HepG2 (cell line): ENCODE measurements at regions of chr17 and their contacts with region 1.

Region 1: GRCh38 chr17:63425482-63425881 is 20.6 kb downstream of the CYB561 start:
- DNase-seq: peak; percentile 80
- ATAC-seq: peak; percentile 86
- H3K4me3 ChIP-seq: no peak overlapping the region
- H3K27ac ChIP-seq: no peak overlapping the region
- H3K4me1 ChIP-seq: peaks cover 21% of the 10 kb centered on the region
- H3K27me3 ChIP-seq: peaks cover 13 to 65% of the 10 kb centered on the region in 2 experiments; a peak in 4 of 5 replicates
- CTCF ChIP-seq: peak; percentile 97
- EP300 ChIP-seq: no peak
- POLR2A ChIP-seq: no peak
- RAD21 ChIP-seq: peak; percentile 97

Region 2: GRCh38 chr17:63113183-63113582 is 312.3 kb before region 1 on chr17:
- CTCF ChIA-PET with region 1: no interaction called
- POLR2A ChIA-PET with region 1: no interaction called
- in situ Hi-C with region 1: no loop called
- intact Hi-C with region 1: no loop called
- DNase-seq: peak; percentile 19
- ATAC-seq: peak; percentile 50; the same call in 1 of the 3 replicates
- H3K4me3 ChIP-seq: no peak overlapping the region
- H3K27ac ChIP-seq: no peak overlapping the region
- H3K4me1 ChIP-seq: no peaks in the 10 kb centered on the region
- H3K27me3 ChIP-seq: no peaks in the 10 kb centered on the region
- CTCF ChIP-seq: peak; percentile 37; the same call in 1 of the 2 replicates
- EP300 ChIP-seq: no peak
- POLR2A ChIP-seq: no peak
- RAD21 ChIP-seq: no peak

Region 3: GRCh38 chr17:63381101-63381729 is 44.3 kb before region 1 on chr17:
- CTCF ChIA-PET with region 1: no interaction called
- POLR2A ChIA-PET with region 1: no interaction called
- in situ Hi-C with region 1: no loop called
- intact Hi-C with region 1: no loop called
- DNase-seq: no peak
- ATAC-seq: no peak
- H3K4me3 ChIP-seq: no peak overlapping the region
- H3K27ac ChIP-seq: no peak overlapping the region
- H3K4me1 ChIP-seq: no peaks in the 10 kb centered on the region
- H3K27me3 ChIP-seq: peaks cover 0 to 8% of the 10 kb centered on the region in 2 experiments; a peak in 2 of 5 replicates
- CTCF ChIP-seq: no peak
- EP300 ChIP-seq: no peak
- POLR2A ChIP-seq: no peak
- RAD21 ChIP-seq: no peak

Region 4: GRCh38 chr17:63478791-63479494 is 53.5 kb after region 1 on chr17:
- CTCF ChIA-PET with region 1: interaction called, 53 read pairs
- POLR2A ChIA-PET with region 1: no interaction called
- in situ Hi-C with region 1: loop called (anchors 5 kb)
- intact Hi-C with region 1: loop called (anchors 1 kb)
- DNase-seq: peak; percentile 80
- ATAC-seq: peak; percentile 88
- H3K4me3 ChIP-seq: no peak overlapping the region
- H3K27ac ChIP-seq: no peak overlapping the region
- H3K4me1 ChIP-seq: peaks cover 28% of the 10 kb centered on the region
- H3K27me3 ChIP-seq: peaks cover 27 to 87% of the 10 kb centered on the region in 2 experiments
- CTCF ChIP-seq: peak; percentile 98
- EP300 ChIP-seq: no peak
- POLR2A ChIP-seq: no peak
- RAD21 ChIP-seq: peak; percentile 88

Region 5: GRCh38 chr17:63571763-63572271 is 146.3 kb after region 1 on chr17:
- CTCF ChIA-PET with region 1: interaction called, 8 read pairs
- POLR2A ChIA-PET with region 1: no interaction called
- in situ Hi-C with region 1: no loop called
- intact Hi-C with region 1: loop called (anchors 10 kb)
- DNase-seq: peak; percentile 16
- ATAC-seq: no peak
- H3K4me3 ChIP-seq: no peak overlapping the region
- H3K27ac ChIP-seq: no peak overlapping the region
- H3K4me1 ChIP-seq: peaks cover 12% of the 10 kb centered on the region
- H3K27me3 ChIP-seq: no peaks in the 10 kb centered on the region
- CTCF ChIP-seq: no peak
- EP300 ChIP-seq: no peak
- POLR2A ChIP-seq: no peak
- RAD21 ChIP-seq: no peak

Region 6: DNA sequence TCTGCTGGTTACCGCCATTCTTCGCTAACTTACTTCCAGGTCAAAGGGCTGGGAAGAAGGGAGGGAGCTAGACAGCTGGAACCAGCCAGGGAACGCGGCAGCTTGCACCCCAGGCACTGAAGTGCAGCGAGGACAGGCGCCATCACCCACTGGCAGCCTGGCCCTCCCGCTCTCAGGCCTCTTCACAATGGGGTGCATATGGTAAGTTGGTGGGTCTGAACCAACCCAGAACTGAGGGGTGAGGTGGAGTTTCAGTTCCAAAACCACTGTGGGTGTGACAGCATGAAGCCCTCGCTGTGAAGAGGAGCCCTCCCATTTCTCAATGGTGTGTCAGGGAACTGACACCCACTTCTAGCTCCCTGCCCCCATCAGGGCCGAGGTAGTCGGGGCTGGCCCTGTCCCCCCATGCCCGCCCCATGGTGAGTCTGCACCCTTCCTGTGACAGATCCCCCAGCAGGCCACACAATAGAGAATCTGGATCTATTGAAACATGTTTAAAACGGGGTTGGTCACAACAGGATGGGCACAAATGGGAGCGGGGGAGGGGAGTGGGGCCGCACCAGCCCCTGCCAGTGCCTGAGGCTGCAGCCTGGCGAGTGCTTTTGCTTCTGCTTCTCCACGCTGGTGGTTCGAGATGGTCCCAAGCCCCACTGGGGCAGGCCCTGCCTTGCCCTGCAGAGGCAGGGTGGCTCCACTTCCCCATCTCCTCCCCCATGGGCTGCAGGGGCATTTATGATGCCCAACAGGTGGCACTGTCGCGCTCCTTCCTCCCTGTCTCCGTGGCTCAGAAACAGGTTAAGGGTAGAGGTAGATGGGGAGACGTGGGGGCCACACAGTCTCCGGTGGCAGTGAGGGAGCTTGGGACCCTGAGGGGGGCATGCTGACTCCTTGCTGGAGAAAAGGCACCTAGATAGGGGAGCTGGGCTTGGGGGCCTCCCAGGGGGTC is 272.1 kb after region 1 on chr17:
- CTCF ChIA-PET with region 1: interaction called, 9 read pairs
- POLR2A ChIA-PET with region 1: no interaction called
- in situ Hi-C with region 1: loop called (anchors 10 kb)
- intact Hi-C with region 1: loop called (anchors 5 kb)
- DNase-seq: peak; percentile 45
- ATAC-seq: peak; percentile 39
- H3K4me3 ChIP-seq: no peak overlapping the region
- H3K27ac ChIP-seq: no peak overlapping the region
- H3K4me1 ChIP-seq: peaks cover 18% of the 10 kb centered on the region
- H3K27me3 ChIP-seq: no peaks in the 10 kb centered on the region
- CTCF ChIP-seq: peak; percentile 84
- EP300 ChIP-seq: no peak
- POLR2A ChIP-seq: peak in 1 of 2 experiments; percentile 44; a peak in 1 of 4 replicates
- RAD21 ChIP-seq: peak; percentile 33; the same call in 1 of the 2 replicates

Region 7: DNA sequence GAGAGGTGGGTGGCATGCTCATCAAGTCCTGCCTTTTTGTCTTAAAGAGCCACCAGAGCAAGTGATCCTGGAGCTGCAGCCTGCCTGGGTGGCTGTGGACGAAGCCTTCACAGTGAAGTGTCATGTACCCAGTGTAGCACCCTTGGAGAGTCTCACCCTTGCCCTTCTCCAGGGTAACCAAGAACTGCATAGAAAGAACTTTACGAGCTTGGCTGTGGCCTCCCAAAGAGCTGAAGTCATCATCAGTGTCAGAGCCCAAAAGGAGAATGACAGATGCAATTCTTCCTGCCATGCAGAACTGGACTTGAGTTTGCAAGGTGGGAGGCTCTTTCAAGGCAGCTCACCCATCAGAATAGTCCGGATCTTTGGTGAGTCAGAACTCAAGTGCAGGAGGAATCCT is 433.8 kb after region 1 on chr17:
- CTCF ChIA-PET with region 1: no interaction called
- POLR2A ChIA-PET with region 1: no interaction called
- in situ Hi-C with region 1: no loop called
- intact Hi-C with region 1: loop called (anchors 10 kb)
- DNase-seq: no peak
- ATAC-seq: no peak
- H3K4me3 ChIP-seq: no peak overlapping the region
- H3K27ac ChIP-seq: no peak overlapping the region
- H3K4me1 ChIP-seq: peaks cover 23% of the 10 kb centered on the region
- H3K27me3 ChIP-seq: peaks cover 5 to 36% of the 10 kb centered on the region in 2 experiments; a peak in 3 of 5 replicates
- CTCF ChIP-seq: no peak
- EP300 ChIP-seq: no peak
- POLR2A ChIP-seq: no peak
- RAD21 ChIP-seq: no peak